ENCODE measurements at regions of chr5 and their contacts with region 1.

Region 1: DNA sequence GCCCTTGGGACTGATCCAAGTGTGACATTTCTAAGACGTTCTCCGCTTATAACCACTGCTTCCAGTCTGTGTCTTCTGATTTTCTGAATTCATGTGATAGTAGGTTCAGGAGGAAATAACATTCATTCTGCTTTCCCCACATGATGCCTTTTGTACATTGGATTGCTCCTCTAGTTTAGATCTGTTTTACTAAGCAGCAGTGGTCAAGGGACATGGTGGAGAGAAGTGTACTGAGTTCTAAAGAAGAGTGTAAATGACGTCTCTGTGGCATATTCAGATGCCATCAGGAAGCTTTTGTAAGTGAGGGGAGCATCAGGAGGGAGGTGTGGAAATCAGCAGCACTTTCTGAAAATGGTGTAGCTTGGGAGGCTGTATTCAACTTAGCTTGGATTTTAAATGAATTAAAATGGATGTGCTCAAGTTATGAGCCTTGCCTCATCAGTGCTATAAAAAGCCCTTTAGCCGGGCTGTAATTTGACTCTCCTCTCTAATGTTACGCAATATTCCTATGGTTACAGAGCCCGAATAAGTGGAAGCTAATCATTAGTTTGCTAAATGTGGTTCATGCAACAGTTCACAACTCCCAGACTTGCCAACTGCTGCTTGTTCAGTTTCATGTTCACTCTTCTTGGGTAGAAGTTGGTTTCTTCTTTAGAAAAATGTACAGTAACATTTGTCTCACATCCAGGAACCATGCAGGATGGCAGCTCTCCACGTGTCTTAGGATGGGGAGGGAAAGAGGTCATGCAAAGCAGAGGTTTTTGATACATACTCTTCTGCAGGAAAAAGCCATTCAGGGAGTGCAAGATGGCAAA is 281.3 kb downstream of the ARHGAP26 start:
- DNase-seq: no peak
- CTCF ChIP-seq: no peak

Region 2: DNA sequence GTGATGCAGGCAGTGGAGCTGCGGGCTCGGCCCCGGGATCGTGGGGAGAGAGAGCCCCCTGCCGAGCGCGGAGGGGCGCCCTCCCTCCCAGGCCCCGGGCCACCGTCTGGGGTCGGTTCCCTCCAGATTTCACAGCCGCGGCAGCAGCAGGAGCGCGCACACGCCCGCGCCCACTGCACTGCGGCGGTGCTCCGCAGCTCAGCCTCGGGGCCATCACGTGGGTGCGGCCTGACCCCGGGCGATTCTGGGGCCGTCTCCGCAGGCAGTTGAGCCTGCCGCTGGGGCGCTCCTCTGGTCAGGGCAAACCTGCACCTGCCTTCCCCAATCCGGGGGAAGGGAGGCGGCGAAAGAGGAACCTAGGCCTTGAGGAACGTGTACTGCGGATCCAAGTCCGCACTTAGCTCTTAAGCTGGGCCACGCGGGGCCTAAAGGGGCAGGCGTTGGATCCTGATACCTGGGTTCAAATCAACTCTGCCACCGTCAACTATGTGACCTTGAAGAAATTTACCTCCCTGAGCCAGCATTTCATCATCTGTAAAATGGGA is 1137.2 kb before region 1 on chr5:
- CTCF ChIA-PET with region 1: no interaction called
- POLR2A ChIA-PET with region 1: no interaction called
- DNase-seq: peak; percentile 66
- CTCF ChIP-seq: peak; percentile 29

Region 3: DNA sequence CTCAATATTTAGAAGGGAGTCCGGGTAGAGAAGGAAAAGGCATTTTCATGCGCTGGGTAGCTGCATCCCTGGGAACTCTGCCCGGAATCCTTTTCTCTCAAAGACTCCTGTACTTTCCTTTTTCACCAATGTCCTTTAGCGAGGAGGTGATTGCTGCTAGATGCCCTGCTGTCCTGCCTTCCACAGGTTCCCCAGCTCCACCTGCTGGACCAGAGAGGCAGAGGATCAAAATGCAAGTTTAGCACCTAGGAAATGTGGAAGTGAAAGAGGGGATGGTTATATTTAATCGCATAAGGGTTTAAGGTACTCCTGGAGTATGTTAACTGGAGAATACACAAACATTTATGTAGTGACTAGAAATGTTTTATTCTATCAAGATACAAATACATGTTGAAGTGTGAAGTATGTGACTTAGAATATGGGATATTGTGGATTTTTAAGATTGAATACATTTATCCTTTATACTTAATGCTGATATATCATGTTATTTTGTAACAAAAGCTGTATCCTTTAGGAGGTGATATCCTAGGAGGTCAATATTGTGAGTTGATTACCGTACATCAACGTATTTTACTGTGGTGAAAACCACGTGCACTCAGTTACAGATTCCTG is 135.5 kb before region 1 on chr5:
- CTCF ChIA-PET with region 1: no interaction called
- POLR2A ChIA-PET with region 1: no interaction called
- DNase-seq: peak; percentile 48
- CTCF ChIP-seq: peak; percentile 41

Region 4: DNA sequence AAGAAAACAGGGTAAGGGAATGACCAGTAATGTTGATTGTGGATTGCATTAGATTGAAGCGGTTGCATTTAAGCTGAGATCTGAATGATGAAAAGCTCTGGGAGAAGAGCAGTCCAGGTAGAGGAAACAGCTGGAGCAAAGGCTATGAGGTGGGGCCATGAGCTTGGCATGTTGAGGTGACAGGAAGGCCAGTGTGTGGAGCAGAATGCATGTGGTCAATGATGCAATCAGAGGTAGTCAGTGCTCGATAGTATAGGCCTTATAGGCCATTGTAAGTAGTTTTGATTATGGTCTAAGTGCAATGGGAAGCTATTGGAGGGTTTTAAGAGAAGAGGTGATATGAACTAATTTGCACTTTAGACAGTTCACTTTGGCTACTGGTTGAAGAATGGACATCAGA is 10.8 kb before region 1 on chr5:
- CTCF ChIA-PET with region 1: interaction called, 11 read pairs
- POLR2A ChIA-PET with region 1: no interaction called
- DNase-seq: no peak
- CTCF ChIP-seq: no peak

Region 5: DNA sequence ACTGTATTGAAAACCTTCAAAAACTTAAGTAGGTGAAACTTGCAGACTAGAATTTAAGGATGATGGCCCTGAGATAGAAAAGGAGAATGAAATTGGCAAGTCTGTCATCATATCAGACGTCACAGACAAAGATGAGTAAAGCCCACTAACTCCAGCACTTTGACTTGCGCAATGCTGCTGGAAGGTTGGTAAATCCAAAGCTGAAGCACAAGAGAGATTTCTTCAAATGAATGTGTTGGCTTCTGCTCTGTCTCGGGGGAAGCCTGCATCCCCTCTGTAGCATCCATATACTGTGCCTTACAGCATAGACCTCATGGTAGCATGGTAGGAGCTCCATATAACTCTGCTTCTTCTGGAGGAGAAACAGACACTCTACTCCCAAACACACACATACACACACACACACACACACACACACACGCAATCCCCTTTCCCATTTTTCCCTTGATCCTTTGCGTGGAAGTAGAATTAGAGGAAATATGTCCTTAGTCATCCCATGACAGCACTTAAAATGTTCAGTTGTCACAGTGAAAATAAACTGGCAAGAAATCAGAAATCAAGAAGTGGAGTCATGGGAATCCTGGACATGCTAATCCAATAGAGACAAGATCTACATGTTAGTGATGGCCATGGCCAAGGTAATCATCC is 110.6 kb after region 1 on chr5:
- CTCF ChIA-PET with region 1: no interaction called
- POLR2A ChIA-PET with region 1: no interaction called
- DNase-seq: no peak
- CTCF ChIP-seq: no peak